Vagina (tissue), 2 donors: ENCODE measurements at regions of chr17 and their contacts with region 1.

Region 1: GRCh38 chr17:66549731-66550207 is 247.4 kb downstream of the PRKCA start:
- DNase-seq: no peak
- H3K4me3 ChIP-seq: no peak overlapping the region
- H3K27ac ChIP-seq: no peak overlapping the region
- H3K4me1 ChIP-seq: peaks cover 8% of the 10 kb centered on the region
- H3K27me3 ChIP-seq: no peaks in the 10 kb centered on the region
- CTCF ChIP-seq: no peak
- POLR2A ChIP-seq: no peak

Region 2: DNA sequence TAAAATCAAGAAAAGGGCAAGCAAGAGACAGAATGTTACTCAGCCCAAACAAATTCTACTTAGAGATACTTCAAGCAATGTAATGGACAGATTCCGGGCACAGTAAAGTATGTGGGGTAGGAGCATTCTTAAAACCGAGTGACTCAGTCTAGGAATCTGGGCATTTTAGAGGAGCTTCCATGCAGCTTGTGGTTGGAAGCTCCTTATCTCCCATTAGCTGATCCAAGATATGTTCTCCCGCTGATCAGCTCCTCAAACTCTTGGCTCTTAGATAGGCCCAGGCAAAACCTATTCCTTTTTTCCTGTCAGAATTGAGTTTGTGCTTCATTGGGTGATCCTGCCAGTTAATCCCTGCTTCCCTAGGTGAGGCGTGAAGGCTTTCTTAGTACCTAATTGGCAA is 661.1 kb before region 1 on chr17:
- intact Hi-C with region 1: no loop called
- DNase-seq: no peak
- H3K4me3 ChIP-seq: no peak overlapping the region
- H3K27ac ChIP-seq: no peak overlapping the region
- H3K4me1 ChIP-seq: peaks cover 20% of the 10 kb centered on the region
- H3K27me3 ChIP-seq: no peaks in the 10 kb centered on the region
- CTCF ChIP-seq: no peak
- POLR2A ChIP-seq: no peak

Region 3: DNA sequence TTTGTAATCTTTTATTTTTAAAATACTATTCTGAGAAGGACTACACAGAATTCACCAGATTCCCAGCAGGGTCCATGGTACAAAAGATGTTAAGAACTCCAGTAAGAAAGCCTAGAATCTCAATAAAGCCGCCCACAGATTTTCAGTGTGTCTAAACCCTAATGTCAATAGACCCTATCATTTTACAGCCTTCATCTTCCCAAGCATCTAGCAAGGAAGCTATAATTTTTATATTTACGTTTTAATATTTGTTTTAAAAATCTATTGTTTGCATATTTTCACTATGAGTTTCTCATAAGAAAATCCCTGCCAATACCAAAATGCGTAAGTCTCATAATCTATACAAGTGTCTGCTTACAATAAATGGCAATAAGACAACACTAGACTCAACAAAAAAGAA is 506.3 kb before region 1 on chr17:
- intact Hi-C with region 1: no loop called
- DNase-seq: no peak
- H3K4me3 ChIP-seq: no peak overlapping the region
- H3K27ac ChIP-seq: no peak overlapping the region
- H3K4me1 ChIP-seq: no peaks in the 10 kb centered on the region
- H3K27me3 ChIP-seq: no peaks in the 10 kb centered on the region
- CTCF ChIP-seq: no peak
- POLR2A ChIP-seq: no peak

Region 4: GRCh38 chr17:66493991-66494803 is 55.6 kb before region 1 on chr17:
- intact Hi-C with region 1: loop called (anchors 10 kb)
- DNase-seq: no peak
- H3K4me3 ChIP-seq: no peak overlapping the region
- H3K27ac ChIP-seq: no peak overlapping the region
- H3K4me1 ChIP-seq: no peaks in the 10 kb centered on the region
- H3K27me3 ChIP-seq: no peaks in the 10 kb centered on the region
- CTCF ChIP-seq: no peak
- POLR2A ChIP-seq: no peak